ENCODE measurements at regions of chr14 and their contacts with region 1.

Region 1: DNA sequence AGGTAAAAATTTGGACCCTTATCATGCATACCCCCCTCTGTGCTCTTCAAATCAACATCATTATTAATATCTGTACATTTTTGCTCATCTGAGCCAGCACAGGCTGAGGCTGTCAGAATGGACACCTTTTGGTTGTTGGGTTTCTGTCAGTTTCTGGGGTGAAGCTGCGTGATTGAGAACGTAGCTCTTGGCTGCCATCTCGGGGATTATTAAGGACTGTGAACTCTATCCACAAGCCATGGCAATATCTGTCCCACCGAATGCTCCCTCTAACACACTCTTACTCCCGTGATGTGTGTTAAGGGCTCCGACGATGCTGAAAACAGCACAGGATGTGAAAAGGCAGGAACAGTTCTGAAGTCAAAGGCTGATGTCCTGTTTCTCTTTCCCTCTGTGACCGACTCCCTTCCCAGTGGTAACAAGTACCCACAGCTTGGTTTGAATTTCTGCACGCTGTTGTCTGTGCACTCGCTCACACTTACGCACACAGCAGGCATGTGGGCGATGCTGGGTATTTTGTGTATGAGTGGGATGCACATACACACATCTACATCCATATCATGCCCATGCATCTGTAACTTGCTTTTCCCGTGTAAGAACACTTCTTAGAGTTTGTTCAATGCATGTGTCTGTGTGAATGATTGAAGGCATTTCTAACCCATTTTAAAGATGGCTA is 405.6 kb downstream of the TMEM121 start:
- DNase-seq: no peak
- H3K4me3 ChIP-seq: no peak overlapping the region
- H3K27ac ChIP-seq: no peak overlapping the region
- H3K4me1 ChIP-seq: no peaks in the 10 kb centered on the region
- H3K27me3 ChIP-seq: peaks cover 0 to 30% (median 0%) of the 10 kb centered on the region in 7 donors
- CTCF ChIP-seq: no peak
- POLR2A ChIP-seq: no peak

Region 2: GRCh38 chr14:105275267-105275946 is 656.5 kb before region 1 on chr14:
- intact Hi-C with region 1: no loop called
- DNase-seq: no peak
- H3K4me3 ChIP-seq: no peak overlapping the region
- H3K27ac ChIP-seq: no peak overlapping the region
- H3K4me1 ChIP-seq: peaks cover 0 to 12% (median 0%) of the 10 kb centered on the region in 6 donors
- H3K27me3 ChIP-seq: no peaks in the 10 kb centered on the region
- CTCF ChIP-seq: no peak
- POLR2A ChIP-seq: no peak

Region 3: DNA sequence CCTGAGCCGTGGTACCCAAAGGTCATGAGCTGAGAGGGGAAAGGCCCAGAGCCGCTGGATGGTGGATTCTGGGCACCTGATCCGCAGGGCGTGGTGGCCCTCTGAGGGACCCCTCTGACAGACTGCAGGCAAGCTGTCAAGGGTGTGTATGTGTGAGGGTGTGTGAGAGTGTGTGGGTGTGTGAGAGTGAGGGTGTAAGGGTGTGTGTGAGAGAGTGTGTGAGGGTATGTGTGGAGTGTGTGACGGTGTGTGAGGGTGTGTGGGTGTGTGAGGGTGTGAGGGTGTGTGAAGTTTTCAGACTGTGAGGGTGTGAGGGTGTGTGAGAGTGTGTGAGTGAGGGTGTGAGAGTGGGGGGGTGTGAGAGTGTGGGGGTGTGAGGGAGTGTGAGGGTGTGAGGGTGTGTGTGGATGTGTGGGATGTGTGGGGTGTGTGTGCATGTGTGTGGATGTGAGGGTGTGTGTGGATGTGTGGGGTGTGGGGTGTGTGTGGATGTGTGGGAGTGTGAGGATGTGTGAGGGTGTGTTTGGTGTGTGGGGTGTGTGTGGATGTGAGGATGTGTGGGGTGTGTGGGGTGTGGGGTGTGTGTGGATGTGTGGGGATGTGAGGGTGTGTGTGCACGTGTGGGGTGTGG is 248.9 kb before region 1 on chr14:
- intact Hi-C with region 1: loop called (anchors 10 kb)
- DNase-seq: no peak
- H3K4me3 ChIP-seq: no peak overlapping the region
- H3K27ac ChIP-seq: peak overlapping the region in 6 of 8 donors; percentile 33 to 90 (median 68)
- H3K4me1 ChIP-seq: peaks cover 0 to 14% (median 2%) of the 10 kb centered on the region in 6 donors
- H3K27me3 ChIP-seq: no peaks in the 10 kb centered on the region
- CTCF ChIP-seq: no peak
- POLR2A ChIP-seq: no peak

Region 4: GRCh38 chr14:106003351-106003750 is 71.4 kb after region 1 on chr14:
- intact Hi-C with region 1: no loop called
- DNase-seq: no peak
- H3K4me3 ChIP-seq: no peak overlapping the region
- H3K27ac ChIP-seq: no peak overlapping the region
- H3K4me1 ChIP-seq: peaks cover 0 to 27% (median 6%) of the 10 kb centered on the region in 6 donors
- H3K27me3 ChIP-seq: no peaks in the 10 kb centered on the region
- CTCF ChIP-seq: no peak
- POLR2A ChIP-seq: no peak